ENCODE measurements at regions of chr9 and their contacts with region 1.

Region 1: DNA sequence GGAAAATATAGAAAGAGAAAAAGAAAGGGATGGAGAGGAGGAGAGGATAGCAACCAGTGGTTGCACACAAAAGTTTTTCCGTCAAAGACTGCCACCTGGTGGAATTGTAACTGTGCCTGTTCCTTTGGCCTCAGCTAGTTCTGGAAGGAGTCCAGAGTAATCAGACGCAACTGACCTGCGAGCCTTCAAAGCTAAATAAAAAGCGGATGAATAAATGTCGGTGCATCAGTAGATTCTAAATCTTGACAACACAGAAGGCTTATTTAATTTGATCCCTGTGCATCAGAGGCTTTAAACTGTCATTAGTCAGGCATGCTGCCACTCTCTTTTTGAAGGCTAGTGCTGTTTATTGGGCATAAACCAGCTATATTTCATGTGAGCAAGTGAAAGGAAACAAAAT is 132.9 kb upstream of the ACO1 start:
- DNase-seq: peak; percentile 80
- ATAC-seq: peak; percentile 90
- H3K4me3 ChIP-seq: no peak overlapping the region; a peak in 1 of 6 replicates
- H3K27ac ChIP-seq: no peak overlapping the region
- H3K4me1 ChIP-seq: peaks cover 45% of the 10 kb centered on the region
- H3K27me3 ChIP-seq: no peaks in the 10 kb centered on the region
- CTCF ChIP-seq: peak; percentile 86
- EP300 ChIP-seq: no peak
- POLR2A ChIP-seq: no peak
- RAD21 ChIP-seq: peak; percentile 71

Region 2: DNA sequence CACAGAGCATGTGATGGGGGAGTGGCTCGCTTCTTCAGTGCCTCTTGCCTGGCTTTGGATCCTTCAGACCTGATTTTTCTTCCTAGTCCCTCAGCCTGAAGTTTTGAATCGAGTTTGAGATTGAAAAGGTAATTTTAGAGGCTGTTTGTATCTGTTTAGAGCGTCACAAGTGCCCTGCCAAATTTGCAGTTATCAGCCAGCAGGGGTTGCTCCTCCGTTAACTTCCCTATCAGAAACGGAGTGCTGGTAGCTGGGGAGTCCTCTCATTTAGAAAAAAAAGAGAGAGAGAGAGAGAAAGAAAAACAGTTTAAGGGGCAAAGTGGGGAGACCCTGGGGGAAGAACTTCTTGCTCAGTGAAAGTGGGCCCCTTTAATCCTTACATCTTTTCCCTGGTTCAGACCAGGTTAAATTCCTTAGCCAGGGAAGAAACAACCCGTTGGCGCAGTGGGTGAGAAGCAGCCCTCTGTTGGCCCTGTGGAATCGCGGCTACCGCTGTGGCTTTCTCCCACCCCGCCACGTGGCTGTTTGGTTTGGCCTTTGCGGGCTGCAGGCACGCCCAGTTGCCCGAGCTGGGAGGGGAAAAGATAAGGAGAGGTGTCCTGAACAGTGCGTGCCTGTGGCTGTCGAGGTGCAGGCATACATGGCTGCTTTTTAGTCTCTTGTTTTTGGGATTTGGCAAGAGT is 443.8 kb before region 1 on chr9:
- CTCF ChIA-PET with region 1: interaction called, 4 read pairs
- POLR2A ChIA-PET with region 1: no interaction called
- in situ Hi-C with region 1: no loop called
- intact Hi-C with region 1: loop called (anchors 1 kb)
- DNase-seq: peak; percentile 43
- ATAC-seq: peak; percentile 97
- H3K4me3 ChIP-seq: peak overlapping the region in 1 of 3 experiments; percentile 40; a peak in 1 of 6 replicates
- H3K27ac ChIP-seq: no peak overlapping the region
- H3K4me1 ChIP-seq: no peaks in the 10 kb centered on the region
- H3K27me3 ChIP-seq: peaks cover 1 to 13% of the 10 kb centered on the region in 2 experiments; a peak in 3 of 5 replicates
- CTCF ChIP-seq: peak; percentile 49
- EP300 ChIP-seq: no peak
- POLR2A ChIP-seq: no peak
- RAD21 ChIP-seq: no peak

Region 3: GRCh38 chr9:31839273-31839672 is 412.3 kb before region 1 on chr9:
- CTCF ChIA-PET with region 1: interaction called, 8 read pairs
- POLR2A ChIA-PET with region 1: no interaction called
- in situ Hi-C with region 1: loop called (anchors 10 kb)
- intact Hi-C with region 1: loop called (anchors 1 kb)
- DNase-seq: peak; percentile 41
- ATAC-seq: peak; percentile 85
- H3K4me3 ChIP-seq: no peak overlapping the region
- H3K27ac ChIP-seq: no peak overlapping the region
- H3K4me1 ChIP-seq: no peaks in the 10 kb centered on the region
- H3K27me3 ChIP-seq: peaks cover 0 to 3% of the 10 kb centered on the region in 2 experiments; a peak in 2 of 5 replicates
- CTCF ChIP-seq: peak; percentile 62
- EP300 ChIP-seq: no peak
- POLR2A ChIP-seq: no peak
- RAD21 ChIP-seq: peak; percentile 19; the same call in 1 of the 2 replicates

Region 4: DNA sequence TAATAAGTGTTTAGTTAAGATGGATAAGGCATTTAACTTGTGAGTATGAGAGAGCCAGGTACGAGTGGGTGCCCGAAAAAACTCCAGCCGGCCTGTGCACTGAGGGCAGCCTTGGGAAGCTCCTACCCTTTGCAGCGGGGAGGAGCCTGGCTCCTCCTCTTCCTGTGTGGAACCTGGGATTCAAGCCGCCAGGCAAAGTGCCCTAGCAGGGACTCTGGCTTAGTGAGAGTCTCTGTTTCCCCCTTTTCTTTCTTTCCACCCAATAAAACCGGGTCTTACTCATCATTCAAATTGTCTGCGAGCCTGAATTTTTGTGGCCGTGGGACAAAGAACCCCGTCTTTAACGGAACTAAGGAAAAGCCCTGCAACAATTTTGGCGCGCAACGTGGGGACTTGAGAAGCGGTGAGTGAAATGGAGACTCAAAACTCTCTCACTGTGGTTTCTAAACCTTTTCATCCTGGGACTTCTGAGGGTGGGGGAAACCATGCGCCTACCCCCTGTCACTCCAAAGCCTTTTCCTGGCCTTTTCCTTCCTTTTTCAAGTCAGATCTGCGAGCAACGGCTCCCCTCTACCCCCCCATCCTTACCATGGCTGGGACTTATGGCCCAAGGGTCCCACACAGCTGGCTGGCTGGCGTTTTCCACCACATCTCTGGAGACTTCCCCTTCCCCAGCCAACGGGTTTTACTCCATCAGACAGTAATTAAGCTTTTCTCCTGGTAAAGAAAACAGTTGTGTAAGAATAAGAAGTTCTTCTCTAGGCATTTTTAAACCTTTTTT is 402.8 kb before region 1 on chr9:
- CTCF ChIA-PET with region 1: no interaction called
- POLR2A ChIA-PET with region 1: interaction called, 4 read pairs
- in situ Hi-C with region 1: loop called (anchors 10 kb)
- intact Hi-C with region 1: no loop called
- DNase-seq: peak; percentile 72
- ATAC-seq: peak; percentile 100
- H3K4me3 ChIP-seq: peak overlapping the region; percentile 72 to 83 (median 78)
- H3K27ac ChIP-seq: peak overlapping the region; percentile 77
- H3K4me1 ChIP-seq: peaks cover 20% of the 10 kb centered on the region
- H3K27me3 ChIP-seq: no peaks in the 10 kb centered on the region; a peak in 1 of 5 replicates
- CTCF ChIP-seq: no peak
- EP300 ChIP-seq: no peak
- POLR2A ChIP-seq: peak; percentile 83 to 90
- RAD21 ChIP-seq: no peak

Region 5: DNA sequence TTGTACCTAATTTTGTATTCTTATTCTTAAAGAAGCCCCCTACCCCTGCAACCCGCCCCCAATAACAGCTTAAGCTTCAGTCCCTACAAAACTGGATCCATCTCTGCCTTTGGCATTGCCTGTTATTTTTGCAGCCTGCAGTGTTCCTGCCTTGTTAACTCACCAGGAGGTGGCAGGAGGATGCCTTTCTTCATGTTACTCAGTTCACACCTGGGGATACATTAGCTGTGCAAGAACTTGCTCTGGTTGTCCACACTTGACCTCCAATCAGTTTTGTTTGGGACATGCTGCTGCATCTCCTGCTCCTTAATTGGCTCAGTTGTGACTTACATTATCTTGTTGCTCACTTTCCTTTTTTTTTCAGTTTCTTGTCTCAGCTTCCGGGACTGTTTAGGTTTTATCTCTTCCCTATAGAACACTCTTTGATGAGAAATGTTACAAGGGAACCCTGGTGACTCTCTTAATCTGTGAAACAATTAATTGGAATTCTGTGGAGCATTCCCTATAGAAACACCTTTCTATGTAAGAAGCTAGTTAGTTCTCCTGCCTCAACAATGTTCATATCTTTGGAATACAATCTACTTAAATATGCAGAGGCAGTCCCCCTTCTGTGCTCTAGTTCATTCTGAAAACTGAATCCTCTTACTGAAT is 334.8 kb before region 1 on chr9:
- CTCF ChIA-PET with region 1: no interaction called
- POLR2A ChIA-PET with region 1: no interaction called
- in situ Hi-C with region 1: loop called (anchors 5 kb)
- intact Hi-C with region 1: loop called (anchors 2 kb)
- DNase-seq: peak; percentile 11
- ATAC-seq: peak; percentile 84
- H3K4me3 ChIP-seq: no peak overlapping the region
- H3K27ac ChIP-seq: no peak overlapping the region
- H3K4me1 ChIP-seq: peaks cover 12% of the 10 kb centered on the region
- H3K27me3 ChIP-seq: no peaks in the 10 kb centered on the region
- CTCF ChIP-seq: peak; percentile 66
- EP300 ChIP-seq: no peak
- POLR2A ChIP-seq: no peak
- RAD21 ChIP-seq: no peak

Region 6: DNA sequence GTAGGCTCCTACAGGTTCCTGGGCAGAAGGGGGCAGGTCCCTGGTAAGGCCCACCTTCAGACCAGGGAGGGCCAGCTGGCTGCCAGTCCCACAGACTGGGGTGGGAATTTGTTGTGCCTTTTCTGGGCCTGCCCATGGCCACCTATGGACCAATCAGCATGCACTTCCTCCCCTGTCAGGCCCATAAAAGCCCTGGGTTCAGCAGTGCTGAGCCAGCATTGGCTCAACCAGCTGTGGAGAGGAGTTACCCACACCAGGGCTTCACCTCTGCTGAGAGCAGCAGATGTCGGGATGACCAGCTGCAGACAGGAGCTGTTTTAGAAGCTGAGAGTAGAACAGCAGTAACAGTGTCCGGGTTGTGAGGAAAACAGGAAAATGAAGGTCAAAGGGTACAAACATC is 240.5 kb before region 1 on chr9:
- CTCF ChIA-PET with region 1: no interaction called
- POLR2A ChIA-PET with region 1: no interaction called
- in situ Hi-C with region 1: no loop called
- intact Hi-C with region 1: loop called (anchors 2 kb)
- DNase-seq: no peak
- ATAC-seq: peak; percentile 78
- H3K4me3 ChIP-seq: no peak overlapping the region
- H3K27ac ChIP-seq: no peak overlapping the region
- H3K4me1 ChIP-seq: no peaks in the 10 kb centered on the region
- H3K27me3 ChIP-seq: no peaks in the 10 kb centered on the region
- CTCF ChIP-seq: no peak
- EP300 ChIP-seq: no peak
- POLR2A ChIP-seq: no peak
- RAD21 ChIP-seq: no peak

Region 7: DNA sequence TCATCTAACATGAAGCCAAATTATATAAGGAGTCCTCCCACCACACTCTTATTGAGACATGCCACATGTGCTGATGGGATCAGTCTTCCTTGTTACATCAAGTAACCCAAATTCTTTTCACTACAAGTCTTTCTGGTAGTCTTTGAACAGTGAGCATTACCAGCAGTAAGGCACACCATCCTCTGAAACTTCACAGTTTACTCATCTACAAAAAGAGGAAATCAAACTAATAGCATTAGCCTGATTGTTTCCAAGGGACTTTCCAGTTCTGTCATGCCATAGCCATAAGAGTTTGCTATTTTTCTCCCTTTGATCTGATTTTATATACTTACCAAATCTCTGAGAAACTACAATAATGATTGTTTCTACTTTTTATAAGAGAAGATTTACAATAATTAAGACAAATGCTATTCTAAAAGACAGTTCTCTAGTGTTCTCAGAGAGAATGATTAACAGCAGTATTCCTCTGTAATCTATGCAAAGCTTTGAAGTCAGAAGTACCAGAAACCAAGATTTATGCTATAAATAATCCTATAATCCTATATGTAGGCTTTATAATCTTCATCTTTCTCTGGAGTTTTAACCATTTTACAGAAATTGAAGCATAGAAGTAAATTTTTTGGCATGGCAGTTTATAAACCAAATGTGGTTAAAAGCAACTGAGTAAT is 33.3 kb before region 1 on chr9:
- CTCF ChIA-PET with region 1: no interaction called
- POLR2A ChIA-PET with region 1: no interaction called
- in situ Hi-C with region 1: no loop called
- intact Hi-C with region 1: no loop called
- DNase-seq: no peak
- ATAC-seq: no peak
- H3K4me3 ChIP-seq: no peak overlapping the region
- H3K27ac ChIP-seq: no peak overlapping the region
- H3K4me1 ChIP-seq: no peaks in the 10 kb centered on the region
- H3K27me3 ChIP-seq: no peaks in the 10 kb centered on the region
- CTCF ChIP-seq: no peak
- EP300 ChIP-seq: no peak
- POLR2A ChIP-seq: no peak
- RAD21 ChIP-seq: no peak

Region 8: DNA sequence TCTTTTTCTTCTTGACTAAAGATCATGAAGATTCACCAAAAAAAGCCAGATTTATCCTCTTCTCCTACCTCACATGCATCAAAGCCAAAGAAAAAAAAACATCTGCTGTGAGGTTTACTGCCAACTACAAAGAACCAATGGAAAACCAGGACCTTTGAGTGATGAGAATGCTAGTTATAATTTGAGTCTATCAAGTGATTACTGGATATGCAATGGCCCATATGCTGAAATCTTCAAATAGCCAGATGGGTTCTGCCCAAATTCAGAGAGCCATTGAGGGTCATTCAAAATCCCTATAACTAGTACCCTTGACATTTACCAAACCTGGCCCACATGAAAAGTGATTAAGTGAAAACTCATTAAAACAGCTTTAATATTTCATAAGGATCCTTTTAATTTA is 54.5 kb after region 1 on chr9:
- CTCF ChIA-PET with region 1: no interaction called
- POLR2A ChIA-PET with region 1: no interaction called
- in situ Hi-C with region 1: no loop called
- intact Hi-C with region 1: loop called (anchors 10 kb)
- DNase-seq: no peak
- ATAC-seq: no peak
- H3K4me3 ChIP-seq: no peak overlapping the region
- H3K27ac ChIP-seq: no peak overlapping the region
- H3K4me1 ChIP-seq: peaks cover 24% of the 10 kb centered on the region
- H3K27me3 ChIP-seq: no peaks in the 10 kb centered on the region
- CTCF ChIP-seq: no peak
- EP300 ChIP-seq: no peak
- POLR2A ChIP-seq: no peak
- RAD21 ChIP-seq: no peak

Region 9: DNA sequence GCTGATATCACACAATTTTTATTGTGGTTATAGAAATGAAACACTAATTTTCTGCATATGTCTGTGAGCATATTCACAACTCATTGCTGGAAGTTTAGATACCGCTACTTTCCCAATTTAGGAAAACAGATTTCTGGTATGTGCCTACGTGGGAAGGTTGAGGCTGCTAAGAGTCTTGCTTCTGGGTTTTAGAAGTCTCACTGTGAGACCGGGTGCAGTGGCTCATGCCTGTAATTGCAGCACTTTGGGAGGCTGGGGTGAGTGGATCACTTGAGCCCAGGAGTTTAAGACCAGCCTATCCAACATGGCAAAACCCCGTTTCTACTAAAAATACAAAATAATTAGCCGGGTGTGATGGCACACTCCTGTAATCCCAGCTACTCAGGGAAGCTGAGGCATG is 1966.9 kb after region 1 on chr9:
- CTCF ChIA-PET with region 1: no interaction called
- POLR2A ChIA-PET with region 1: no interaction called
- in situ Hi-C with region 1: no loop called
- intact Hi-C with region 1: no loop called
- DNase-seq: no peak
- ATAC-seq: peak; percentile 59
- H3K4me3 ChIP-seq: no peak overlapping the region
- H3K27ac ChIP-seq: no peak overlapping the region
- H3K4me1 ChIP-seq: peaks cover 18% of the 10 kb centered on the region
- H3K27me3 ChIP-seq: no peaks in the 10 kb centered on the region
- CTCF ChIP-seq: no peak
- EP300 ChIP-seq: no peak
- POLR2A ChIP-seq: no peak
- RAD21 ChIP-seq: no peak